ENCODE measurements at regions of chr19 and their contacts with region 1.

Region 1: GRCh38 chr19:4909897-4910593 is 744 bp downstream of the UHRF1 start:
- DNase-seq: peak; percentile 85 to 96 (median 93)
- ATAC-seq: peak; percentile 82
- H3K4me3 ChIP-seq: peak overlapping the region; percentile 44 to 62
- H3K4me3 Mint-ChIP-seq: peak overlapping the region; percentile 99
- H3K27ac ChIP-seq: no peak overlapping the region
- H3K27ac Mint-ChIP-seq: no peak overlapping the region
- H3K4me1 ChIP-seq: peaks cover 57% of the 10 kb centered on the region
- H3K4me1 Mint-ChIP-seq: peaks cover 66% of the 10 kb centered on the region
- H3K27me3 ChIP-seq: no peaks in the 10 kb centered on the region
- H3K27me3 Mint-ChIP-seq: no peaks in the 10 kb centered on the region
- CTCF ChIP-seq: no peak

Region 2: GRCh38 chr19:4867534-4868285 is 42.3 kb before region 1 on chr19 and contains the start of gene PLIN3:
- CTCF ChIA-PET with region 1: interaction called, 162 read pairs
- POLR2A ChIA-PET with region 1: interaction called, 6 read pairs
- intact Hi-C with region 1: loop called (anchors 1 kb)
- DNase-seq: peak; percentile 74 to 91 (median 87)
- ATAC-seq: peak; percentile 94
- H3K4me3 ChIP-seq: peak within 1 kb of the TSS; percentile 72 to 78
- H3K4me3 Mint-ChIP-seq: peak within 1 kb of the TSS; percentile 78
- H3K27ac ChIP-seq: peak within 1 kb of the TSS; percentile 30 to 55
- H3K27ac Mint-ChIP-seq: peak within 1 kb of the TSS; percentile 49
- H3K4me1 ChIP-seq: peaks cover 17% of the 10 kb centered on the region
- H3K4me1 Mint-ChIP-seq: peaks cover 16% of the 10 kb centered on the region
- H3K27me3 ChIP-seq: no peaks in the 10 kb centered on the region
- H3K27me3 Mint-ChIP-seq: no peaks in the 10 kb centered on the region
- CTCF ChIP-seq: no peak
- total RNA-seq, gene PLIN3: 16.2 to 16.7 TPM

Region 3: GRCh38 chr19:4877753-4878490 is 32.1 kb before region 1 on chr19:
- CTCF ChIA-PET with region 1: interaction called, 162 read pairs
- POLR2A ChIA-PET with region 1: interaction called, 6 read pairs
- intact Hi-C with region 1: no loop called
- DNase-seq: no peak
- ATAC-seq: no peak
- H3K4me3 ChIP-seq: peak overlapping the region in 1 of 2 experiments; percentile 11
- H3K4me3 Mint-ChIP-seq: no peak overlapping the region
- H3K27ac ChIP-seq: no peak overlapping the region
- H3K27ac Mint-ChIP-seq: no peak overlapping the region
- H3K4me1 ChIP-seq: peaks cover 17% of the 10 kb centered on the region
- H3K4me1 Mint-ChIP-seq: peaks cover 16% of the 10 kb centered on the region
- H3K27me3 ChIP-seq: no peaks in the 10 kb centered on the region
- H3K27me3 Mint-ChIP-seq: no peaks in the 10 kb centered on the region
- CTCF ChIP-seq: no peak